ENCODE measurements at regions of chr14 and their contacts with region 1.

Region 1: GRCh38 chr14:75293920-75294642 is 15.5 kb downstream of the FOS start:
- DNase-seq: peak; percentile 97 to 98 (median 98)
- ATAC-seq: peak; percentile 95
- H3K4me3 ChIP-seq: peak overlapping the region; percentile 43
- H3K27ac ChIP-seq: peak overlapping the region; percentile 93
- H3K4me1 ChIP-seq: peaks cover 3% of the 10 kb centered on the region
- H3K27me3 ChIP-seq: no peaks in the 10 kb centered on the region

Region 2: DNA sequence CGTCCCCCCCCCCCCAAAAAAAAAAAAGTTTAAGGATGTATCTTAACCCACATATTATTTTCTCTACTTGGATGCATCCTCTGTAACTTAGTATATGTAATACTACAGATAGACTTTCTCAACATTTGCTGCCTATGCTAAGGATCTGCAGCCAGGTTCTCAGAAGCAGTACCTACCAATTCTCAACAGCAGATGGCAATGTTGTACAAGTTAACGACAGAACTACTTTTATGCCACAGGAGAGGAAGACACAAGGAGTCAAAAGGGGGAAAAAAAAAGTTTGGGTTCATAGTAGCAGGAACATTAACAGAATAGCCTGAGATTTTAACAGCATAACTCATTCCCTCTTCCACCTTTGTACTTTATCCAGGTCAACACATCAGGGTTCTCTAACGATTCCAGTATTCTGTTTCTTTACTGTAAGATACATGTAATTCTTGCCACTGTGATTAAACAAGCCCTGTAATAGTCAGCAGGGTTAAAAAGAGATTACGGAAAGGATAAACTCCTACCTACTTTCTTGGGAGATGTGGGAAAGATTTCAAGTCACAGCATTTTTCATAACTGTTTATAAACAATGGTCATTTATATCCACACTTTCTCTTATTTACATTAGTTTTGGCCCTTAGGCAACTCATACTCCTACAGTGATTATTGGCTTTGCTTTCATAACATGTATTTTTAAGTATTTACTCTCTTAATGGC is 161.5 kb before region 1 on chr14:
- intact Hi-C with region 1: loop called in 3 of 4 experiments (anchors 2 to 5 kb)
- DNase-seq: no peak
- ATAC-seq: peak; percentile 68 to 78
- H3K4me3 ChIP-seq: no peak overlapping the region
- H3K27ac ChIP-seq: no peak overlapping the region
- H3K4me1 ChIP-seq: peaks cover 2% of the 10 kb centered on the region
- H3K27me3 ChIP-seq: no peaks in the 10 kb centered on the region

Region 3: DNA sequence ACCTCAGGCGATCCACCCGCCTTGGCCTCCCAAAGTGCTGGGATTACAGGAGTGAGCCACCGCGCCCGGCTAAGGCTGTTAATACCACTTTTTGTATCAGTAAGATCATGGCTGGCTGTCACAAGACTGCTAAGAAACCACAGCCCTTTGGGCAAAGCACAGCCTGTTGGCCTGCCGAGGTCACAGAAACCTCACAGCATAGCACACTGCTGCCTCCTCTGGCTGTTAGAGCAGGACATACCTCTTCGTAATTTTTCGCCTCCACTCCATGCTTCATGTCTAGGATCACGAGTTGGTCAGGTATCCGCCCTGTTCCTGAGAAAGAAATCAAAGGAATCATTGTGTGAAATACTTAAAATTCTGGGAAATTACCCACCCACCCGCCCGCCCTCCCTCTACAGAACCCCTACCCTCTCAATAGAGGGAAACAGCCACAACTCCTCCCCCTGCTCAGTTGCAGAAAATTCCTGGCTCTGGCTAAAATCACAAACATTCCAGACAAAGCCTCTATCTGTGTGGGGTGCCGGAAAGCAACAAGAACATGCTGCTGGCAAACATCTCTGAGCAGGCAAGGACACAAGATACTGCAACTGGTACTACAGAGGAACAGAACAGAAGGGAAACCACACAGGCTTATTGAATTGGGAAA is 146.5 kb before region 1 on chr14:
- intact Hi-C with region 1: loop called in 1 of 4 experiments (anchors 5 kb)
- DNase-seq: peak; percentile 81 to 91 (median 82)
- ATAC-seq: peak; percentile 94 to 96
- H3K4me3 ChIP-seq: no peak overlapping the region
- H3K27ac ChIP-seq: peak overlapping the region; percentile 99
- H3K4me1 ChIP-seq: peaks cover 11% of the 10 kb centered on the region
- H3K27me3 ChIP-seq: no peaks in the 10 kb centered on the region

Region 4: DNA sequence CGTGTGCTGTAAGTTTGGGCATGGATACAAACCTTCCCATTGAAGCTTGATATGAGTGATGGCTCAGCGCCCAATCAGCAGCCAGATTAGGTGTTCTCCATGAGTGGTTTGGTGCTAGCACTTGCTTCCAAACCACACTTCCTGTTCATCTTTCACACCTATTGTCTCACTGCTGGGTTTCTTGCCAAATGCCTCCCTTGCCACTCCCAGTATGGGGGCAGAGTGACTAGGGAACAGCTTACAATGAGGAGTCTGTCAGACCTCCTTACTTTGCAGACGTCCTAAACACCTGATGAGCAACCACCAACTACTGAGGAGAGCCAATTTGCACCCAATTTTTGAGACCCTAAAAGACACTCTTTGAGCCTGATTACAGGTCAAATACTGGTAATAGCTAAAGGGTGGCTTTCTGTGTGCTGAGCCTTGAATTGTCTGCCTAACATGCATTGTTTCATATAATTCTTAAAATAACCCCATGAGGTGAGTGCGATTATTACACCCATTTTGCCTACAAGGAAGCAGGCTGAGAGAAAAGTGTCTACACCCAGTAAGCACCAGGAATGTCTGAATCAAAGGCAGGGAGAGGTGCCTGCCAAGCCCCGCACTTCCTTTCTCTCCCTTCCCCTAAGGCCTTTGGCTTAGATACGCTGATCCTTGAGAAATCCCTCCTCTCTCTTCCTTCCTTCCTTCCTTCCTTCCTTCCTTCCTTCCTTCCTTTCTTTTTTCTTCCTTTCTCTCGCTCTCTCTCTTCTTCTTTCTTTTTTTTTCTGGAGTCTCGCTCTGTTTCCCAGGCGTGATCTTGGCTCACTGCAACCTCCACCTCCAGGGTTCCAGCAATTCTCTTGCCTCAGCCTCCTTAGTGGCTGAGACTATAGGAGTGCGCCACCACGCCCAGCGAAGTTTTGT is 63.7 kb before region 1 on chr14:
- intact Hi-C with region 1: loop called in 2 of 4 experiments (anchors 10 kb)
- DNase-seq: peak in 2 of 3 donors; percentile 39 to 87
- ATAC-seq: peak; percentile 73 to 82
- H3K4me3 ChIP-seq: no peak overlapping the region
- H3K27ac ChIP-seq: no peak overlapping the region
- H3K4me1 ChIP-seq: no peaks in the 10 kb centered on the region
- H3K27me3 ChIP-seq: no peaks in the 10 kb centered on the region

Region 5: DNA sequence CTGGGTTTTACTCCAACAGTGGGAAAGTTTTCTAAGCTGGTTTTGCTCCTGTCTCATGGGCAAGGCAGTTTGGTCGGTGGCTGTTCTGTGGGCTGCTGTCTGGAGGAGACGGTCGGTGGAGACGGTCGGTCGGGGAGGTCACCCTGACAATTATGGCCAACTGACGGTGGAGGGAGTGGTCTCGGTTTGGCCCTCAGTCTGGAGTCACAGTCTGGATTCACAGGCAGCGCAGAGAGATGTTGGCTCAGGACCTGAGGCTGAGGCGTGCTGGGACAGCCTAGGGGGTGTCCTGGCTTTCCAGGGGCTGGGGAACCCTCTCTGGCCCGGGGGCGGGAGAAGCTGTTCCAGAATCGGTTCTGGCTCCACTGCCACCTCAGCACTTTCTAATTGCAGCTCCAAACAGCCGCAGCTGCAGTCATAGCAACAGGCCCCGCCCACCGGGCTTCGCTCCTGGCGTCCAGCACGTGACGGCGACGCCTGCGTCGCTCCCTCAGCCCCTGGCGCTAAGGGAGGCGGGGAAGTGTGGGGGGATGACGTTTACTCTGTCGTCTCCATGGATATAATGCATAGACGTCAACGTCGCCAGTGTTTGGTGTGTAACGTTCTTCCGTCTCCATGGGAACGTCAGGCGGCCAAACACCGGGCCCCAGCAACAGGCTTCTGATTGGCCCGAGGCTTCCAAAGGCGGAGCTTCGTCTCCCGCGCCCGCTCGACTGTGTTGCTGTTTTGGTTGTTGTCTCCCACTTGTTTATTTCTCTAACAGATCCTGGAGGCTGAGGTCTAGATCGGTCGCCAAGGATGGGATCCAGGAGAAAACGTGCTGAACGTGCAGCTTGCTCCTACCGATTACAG is 35.2 kb before region 1 on chr14:
- intact Hi-C with region 1: loop called in 1 of 4 experiments (anchors 5 kb)
- DNase-seq: peak; percentile 99 to 100 (median 99)
- ATAC-seq: peak; percentile 98
- H3K4me3 ChIP-seq: peak overlapping the region; percentile 22
- H3K27ac ChIP-seq: peak overlapping the region; percentile 74
- H3K4me1 ChIP-seq: peaks cover 5% of the 10 kb centered on the region
- H3K27me3 ChIP-seq: no peaks in the 10 kb centered on the region

Region 6: DNA sequence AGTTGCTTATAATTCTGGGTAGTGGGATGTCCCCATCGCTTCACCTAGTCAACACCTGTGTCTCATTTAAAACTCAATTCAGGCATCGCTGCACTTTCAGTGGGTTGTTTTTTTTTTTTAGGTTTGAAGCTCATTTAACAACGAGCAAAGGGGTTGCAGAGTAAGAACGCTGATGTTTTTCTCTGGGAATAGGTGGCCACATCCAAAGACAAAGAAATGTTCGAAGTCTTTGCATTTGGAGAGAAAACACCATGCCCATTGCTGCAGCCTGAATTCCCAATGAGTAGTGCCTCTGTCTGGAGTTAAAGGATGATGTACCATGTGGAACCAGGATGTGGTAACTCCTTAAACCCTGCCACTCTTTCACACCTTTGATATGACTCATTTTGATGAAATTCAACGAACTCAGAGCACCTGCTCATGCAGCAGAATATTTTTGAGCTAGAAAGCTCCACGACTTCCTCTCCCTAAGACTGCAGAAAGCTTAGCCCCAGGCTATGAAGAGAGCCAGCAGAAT is 193.1 kb after region 1 on chr14:
- intact Hi-C with region 1: no loop called
- DNase-seq: no peak
- ATAC-seq: no peak
- H3K4me3 ChIP-seq: no peak overlapping the region
- H3K27ac ChIP-seq: no peak overlapping the region
- H3K4me1 ChIP-seq: no peaks in the 10 kb centered on the region
- H3K27me3 ChIP-seq: no peaks in the 10 kb centered on the region